ENCODE measurements at regions of chr3 and their contacts with region 1.

Region 1: DNA sequence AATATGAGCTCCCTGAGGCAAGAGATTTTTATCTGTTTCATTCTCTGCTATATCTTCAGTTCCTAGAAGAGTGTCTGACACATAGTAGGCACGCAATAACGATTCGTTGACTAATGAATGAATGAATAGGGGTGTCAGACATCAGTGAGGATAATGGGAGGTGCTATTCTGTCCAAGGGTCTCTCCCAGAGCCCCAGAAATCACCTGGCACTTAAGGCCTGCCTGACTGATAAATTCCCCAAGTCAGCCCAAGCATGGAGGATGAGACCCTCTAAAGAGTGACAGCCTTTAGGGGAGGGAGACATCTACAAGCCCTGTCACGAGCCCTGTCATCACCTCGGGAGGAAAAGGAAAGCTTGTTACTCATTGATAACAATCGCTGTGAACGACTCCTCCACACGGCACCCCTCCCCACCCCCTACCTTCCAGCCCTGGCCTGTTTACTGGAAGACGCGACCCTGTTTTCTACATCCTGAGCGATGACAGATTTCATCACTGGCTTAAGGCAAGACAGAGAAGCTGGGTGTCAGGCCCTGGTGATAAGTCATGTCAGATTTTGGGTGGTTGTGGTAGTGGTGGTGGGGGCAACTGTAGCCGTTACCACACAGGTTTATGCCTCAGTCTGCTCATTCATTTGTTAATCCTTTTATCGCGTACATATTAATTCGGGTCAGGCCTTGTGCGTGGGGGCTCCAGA is 23.1 kb downstream of the BHLHE40 start:
- DNase-seq: peak; percentile 86 to 89 (median 88)
- ATAC-seq: peak; percentile 87
- H3K4me3 ChIP-seq: no peak overlapping the region
- H3K27ac ChIP-seq: peak overlapping the region; percentile 45; the same call in 2 of the 3 replicates
- H3K4me1 ChIP-seq: peaks cover 25 to 58% of the 10 kb centered on the region in 2 experiments
- H3K27me3 ChIP-seq: no peaks in the 10 kb centered on the region
- CTCF ChIP-seq: no peak
- EP300 ChIP-seq: peak; percentile 95
- POLR2A ChIP-seq: no peak
- RAD21 ChIP-seq: peak; percentile 33 to 37; a peak in 3 of 4 replicates

Region 2: DNA sequence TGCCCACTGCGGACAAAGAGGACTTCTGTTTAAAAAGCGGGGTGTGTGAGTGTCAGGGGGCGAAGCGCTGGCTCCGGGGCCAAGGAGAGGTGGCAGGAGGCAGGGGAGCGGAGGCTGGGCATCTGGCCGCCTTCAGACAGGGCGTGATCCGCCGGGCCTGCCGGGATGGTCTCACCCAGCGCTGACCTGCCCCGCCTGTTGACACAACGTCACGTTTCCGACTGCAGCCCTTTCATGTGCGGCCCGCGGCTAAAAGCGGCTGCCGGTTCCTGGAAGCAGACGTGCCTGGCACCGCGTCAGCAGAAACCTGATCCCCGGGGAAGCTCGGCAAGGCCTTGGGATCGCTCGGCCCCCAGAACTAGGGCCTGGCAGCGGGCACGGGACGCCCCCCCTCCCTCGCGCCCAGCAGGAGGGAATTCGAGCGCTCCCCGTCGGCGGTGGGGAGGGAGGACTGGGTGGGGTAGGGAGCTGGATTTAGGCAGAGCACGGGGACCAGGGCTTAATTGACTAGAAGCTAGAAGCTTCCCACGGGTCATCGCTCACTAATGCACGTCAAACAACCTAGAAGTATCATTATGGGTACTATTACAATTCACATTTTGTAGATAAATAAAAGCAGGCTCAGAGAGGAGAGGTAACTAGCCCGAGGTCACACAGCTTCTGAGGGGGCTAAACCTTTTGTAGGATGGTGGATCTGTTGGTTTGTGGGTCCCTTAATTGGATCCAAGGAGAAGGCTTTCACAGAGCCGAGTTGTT is 15.4 kb before region 1 on chr3:
- CTCF ChIA-PET with region 1: interaction called, 5 read pairs
- POLR2A ChIA-PET with region 1: interaction called, 85 read pairs
- in situ Hi-C with region 1: no loop called
- intact Hi-C with region 1: no loop called
- DNase-seq: peak; percentile 61 to 97 (median 76)
- ATAC-seq: peak; percentile 84
- H3K4me3 ChIP-seq: peak overlapping the region; percentile 41
- H3K27ac ChIP-seq: peak overlapping the region; percentile 83
- H3K4me1 ChIP-seq: peaks cover 49 to 75% of the 10 kb centered on the region in 2 experiments
- H3K27me3 ChIP-seq: no peaks in the 10 kb centered on the region
- CTCF ChIP-seq: no peak
- EP300 ChIP-seq: peak; percentile 66
- POLR2A ChIP-seq: peak; percentile 78
- RAD21 ChIP-seq: peak in 1 of 2 experiments; percentile 26; a peak in 1 of 4 replicates

Region 3: DNA sequence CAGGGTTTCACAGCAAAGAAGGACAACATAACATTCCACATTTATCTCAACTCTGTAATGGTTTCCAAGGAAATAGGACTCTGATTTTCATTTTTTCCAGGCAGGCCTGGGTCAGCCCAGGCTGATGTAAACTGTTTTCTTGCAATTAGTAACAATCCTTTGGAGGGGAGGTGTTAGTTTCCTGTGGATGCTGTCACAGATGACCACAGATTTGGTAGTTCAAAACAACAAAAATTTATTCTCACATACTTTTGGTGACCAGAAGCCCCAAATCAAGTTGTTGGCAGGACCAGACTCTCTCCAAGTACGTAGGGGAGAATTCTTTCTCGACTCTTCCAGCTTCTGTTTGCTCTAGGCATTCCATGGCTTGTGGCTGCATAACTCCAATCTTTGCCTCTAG is 273.2 kb after region 1 on chr3:
- CTCF ChIA-PET with region 1: no interaction called
- POLR2A ChIA-PET with region 1: no interaction called
- in situ Hi-C with region 1: no loop called
- intact Hi-C with region 1: no loop called
- DNase-seq: no peak
- ATAC-seq: no peak
- H3K4me3 ChIP-seq: no peak overlapping the region
- H3K27ac ChIP-seq: no peak overlapping the region
- H3K4me1 ChIP-seq: no peaks in the 10 kb centered on the region
- H3K27me3 ChIP-seq: peaks cover 0 to 12% of the 10 kb centered on the region in 2 experiments; a peak in 4 of 5 replicates
- CTCF ChIP-seq: no peak
- EP300 ChIP-seq: no peak
- POLR2A ChIP-seq: no peak
- RAD21 ChIP-seq: no peak